Calu3 (cell line): ENCODE measurements at regions of chr12 and their contacts with region 1.

Region 1: GRCh38 chr12:75526655-75527511 is 15.5 kb upstream of the KRR1 start:
- DNase-seq: peak; percentile 19
- H3K4me3 Mint-ChIP-seq: no peak overlapping the region
- H3K27ac Mint-ChIP-seq: peak overlapping the region; percentile 40
- H3K4me1 Mint-ChIP-seq: peaks cover 17% of the 10 kb centered on the region
- H3K27me3 Mint-ChIP-seq: no peaks in the 10 kb centered on the region
- CTCF ChIP-seq: peak; percentile 55

Region 2: GRCh38 chr12:75635606-75636410 is 108.9 kb after region 1 on chr12:
- CTCF ChIA-PET with region 1: interaction called, 3 read pairs
- intact Hi-C with region 1: loop called (anchors 5 kb)
- DNase-seq: peak; percentile 41
- H3K4me3 Mint-ChIP-seq: no peak overlapping the region
- H3K27ac Mint-ChIP-seq: peak overlapping the region; percentile 80
- H3K4me1 Mint-ChIP-seq: peaks cover 64% of the 10 kb centered on the region
- H3K27me3 Mint-ChIP-seq: no peaks in the 10 kb centered on the region
- CTCF ChIP-seq: no peak

Region 3: DNA sequence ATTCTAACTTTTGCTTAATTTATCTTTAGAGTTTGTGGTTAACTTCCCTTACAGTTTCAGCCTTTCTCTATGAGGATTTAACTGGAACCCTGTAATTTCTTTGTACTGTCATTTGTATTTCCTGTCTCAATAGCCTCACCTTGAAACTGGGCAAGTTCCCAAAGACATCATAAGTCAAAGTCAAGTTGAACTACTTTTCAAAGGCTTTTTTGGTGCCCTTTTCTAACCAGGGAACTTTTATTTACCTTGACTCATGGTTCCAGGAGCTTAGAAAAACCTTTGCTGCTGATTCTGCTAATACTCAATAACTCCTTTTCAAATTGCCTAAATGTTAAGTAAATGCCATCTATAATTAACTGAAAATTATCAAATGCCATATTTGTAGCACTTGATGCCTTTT is 185.4 kb after region 1 on chr12:
- CTCF ChIA-PET with region 1: no interaction called
- intact Hi-C with region 1: loop called (anchors 5 kb)
- DNase-seq: peak; percentile 51
- H3K4me3 Mint-ChIP-seq: no peak overlapping the region
- H3K27ac Mint-ChIP-seq: peak overlapping the region; percentile 91
- H3K4me1 Mint-ChIP-seq: peaks cover 73% of the 10 kb centered on the region
- H3K27me3 Mint-ChIP-seq: no peaks in the 10 kb centered on the region
- CTCF ChIP-seq: no peak

Region 4: DNA sequence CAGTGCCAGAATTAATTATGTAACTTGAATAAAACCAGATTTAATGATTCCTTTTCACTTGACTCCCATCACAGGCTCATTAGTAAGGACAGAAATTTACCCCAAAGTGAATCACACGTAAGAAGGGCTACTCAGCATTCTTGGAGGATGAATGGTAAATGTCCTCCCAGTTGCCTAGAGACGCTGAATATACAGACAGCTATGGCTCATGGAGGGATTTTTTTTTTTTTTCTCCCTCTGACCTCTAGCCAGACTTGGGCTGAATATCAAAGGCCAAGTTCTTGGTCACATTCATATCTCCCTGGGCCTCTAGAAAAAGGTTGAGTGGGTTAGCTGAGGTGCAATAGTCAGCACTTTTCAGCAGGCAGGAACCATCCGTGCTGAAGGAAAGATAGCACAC is 427.2 kb after region 1 on chr12:
- CTCF ChIA-PET with region 1: no interaction called
- intact Hi-C with region 1: loop called (anchors 10 kb)
- DNase-seq: peak; percentile 62
- H3K4me3 Mint-ChIP-seq: peak overlapping the region; percentile 39
- H3K27ac Mint-ChIP-seq: peak overlapping the region; percentile 95
- H3K4me1 Mint-ChIP-seq: peaks cover 65% of the 10 kb centered on the region
- H3K27me3 Mint-ChIP-seq: no peaks in the 10 kb centered on the region
- CTCF ChIP-seq: no peak

Region 5: DNA sequence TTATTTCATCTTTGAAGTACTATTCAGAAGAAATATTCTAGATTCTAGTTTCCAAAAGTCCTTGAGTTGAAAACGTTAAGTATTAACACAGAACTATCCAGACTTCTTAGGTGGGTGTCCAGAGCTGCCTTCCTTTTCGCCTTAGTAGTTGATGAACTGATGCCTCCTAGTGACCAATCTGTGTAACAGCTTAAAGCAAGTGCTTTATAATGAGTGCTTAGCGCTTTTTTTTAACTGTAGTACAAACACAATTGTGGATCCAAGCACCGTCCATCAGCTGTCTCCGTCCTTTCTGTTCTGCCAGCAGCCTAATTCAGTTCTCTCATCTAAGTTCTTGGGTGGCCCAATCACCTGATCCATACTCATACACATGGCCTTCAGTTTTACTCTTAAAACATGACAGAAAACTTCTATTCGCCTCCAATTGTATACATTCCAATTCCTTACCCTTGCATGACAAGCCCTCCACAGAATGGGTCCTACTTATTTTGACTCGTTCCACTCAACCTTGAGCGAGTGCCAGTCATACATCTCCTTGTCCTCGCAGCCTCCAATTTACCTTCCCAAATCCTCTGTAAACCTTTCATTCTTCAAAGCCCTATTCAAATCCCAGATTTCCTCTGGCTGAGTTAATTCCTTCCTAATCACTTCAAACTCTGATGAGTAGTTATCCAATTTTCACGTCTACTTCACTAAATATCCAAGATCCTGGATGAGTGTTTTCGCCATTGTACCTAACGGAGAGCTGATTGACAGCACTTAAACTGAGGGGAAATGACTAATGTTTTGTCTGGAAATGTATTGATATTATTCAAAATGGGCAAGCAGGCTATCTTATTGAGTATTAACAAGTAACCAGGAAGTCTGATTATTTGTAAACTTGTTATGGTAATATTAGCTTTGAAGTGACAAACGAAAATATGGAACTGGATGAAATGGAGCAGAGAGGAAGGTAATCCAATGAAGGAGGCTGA is 510.5 kb after region 1 on chr12:
- CTCF ChIA-PET with region 1: interaction called, 9 read pairs
- intact Hi-C with region 1: loop called (anchors 1 kb)
- DNase-seq: peak; percentile 52
- H3K4me3 Mint-ChIP-seq: peak overlapping the region; percentile 0
- H3K27ac Mint-ChIP-seq: peak overlapping the region; percentile 31
- H3K4me1 Mint-ChIP-seq: peaks cover 57% of the 10 kb centered on the region
- H3K27me3 Mint-ChIP-seq: no peaks in the 10 kb centered on the region
- CTCF ChIP-seq: peak; percentile 71